ENCODE measurements at regions of chr18 and their contacts with region 1.

Region 1: GRCh38 chr18:45820106-45820745 is 5.2 kb upstream of the SIGLEC15 start:
- DNase-seq: no peak
- H3K4me3 ChIP-seq: no peak overlapping the region
- H3K4me3 Mint-ChIP-seq: no peak overlapping the region
- H3K27ac ChIP-seq: no peak overlapping the region
- H3K27ac Mint-ChIP-seq: no peak overlapping the region
- H3K4me1 ChIP-seq: peaks cover 2% of the 10 kb centered on the region
- H3K4me1 Mint-ChIP-seq: peaks cover 7 to 10% (median 9%) of the 10 kb centered on the region in 3 donors
- H3K27me3 ChIP-seq: no peaks in the 10 kb centered on the region
- H3K27me3 Mint-ChIP-seq: peaks cover 10 to 30% of the 10 kb centered on the region in 2 donors

Region 2: DNA sequence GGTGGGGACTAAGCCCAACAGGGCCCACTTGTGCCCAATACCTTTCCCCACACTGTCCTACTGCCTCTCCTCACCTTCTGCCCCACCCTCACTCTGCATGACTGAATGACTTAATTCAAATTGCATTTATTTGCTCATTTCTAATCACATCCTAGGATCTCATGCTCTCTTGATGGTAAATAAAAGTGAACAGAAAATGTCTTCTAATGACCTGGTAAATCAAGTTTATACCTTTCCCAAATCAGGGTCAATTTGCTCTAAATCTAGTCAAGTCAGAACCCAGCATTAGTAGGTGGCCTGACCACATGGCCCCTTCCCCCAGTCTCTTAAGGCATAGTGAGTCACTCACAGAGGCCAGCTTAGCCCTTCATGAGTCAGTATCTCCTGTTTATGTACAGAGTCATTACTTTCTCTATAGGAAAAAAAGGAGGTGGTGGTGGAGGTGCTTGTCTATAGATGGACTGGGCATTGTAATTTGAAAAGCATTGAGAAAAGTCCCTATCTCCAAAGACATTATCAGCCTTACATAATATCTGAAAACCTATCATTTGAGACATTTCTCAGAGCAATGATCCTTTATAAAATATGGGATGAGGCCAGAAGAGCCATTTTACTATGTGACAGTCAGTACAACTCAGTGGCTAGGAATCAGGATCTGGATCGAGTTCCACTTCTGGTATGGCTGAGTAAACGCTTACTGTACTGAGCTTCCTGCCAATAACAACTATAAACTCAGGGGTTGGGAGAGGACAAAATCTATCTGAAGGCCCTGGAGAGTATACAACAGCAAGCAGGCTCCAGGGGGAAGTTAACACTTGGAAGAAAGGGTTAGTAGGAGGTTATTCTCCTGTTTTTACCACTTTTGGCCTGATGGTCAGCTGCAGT is 17.4 kb before region 1 on chr18:
- CTCF ChIA-PET with region 1: no interaction called
- POLR2A ChIA-PET with region 1: interaction called, 14 read pairs
- DNase-seq: no peak
- H3K4me3 ChIP-seq: no peak overlapping the region
- H3K4me3 Mint-ChIP-seq: no peak overlapping the region
- H3K27ac ChIP-seq: no peak overlapping the region
- H3K27ac Mint-ChIP-seq: no peak overlapping the region
- H3K4me1 ChIP-seq: no peaks in the 10 kb centered on the region
- H3K4me1 Mint-ChIP-seq: no peaks in the 10 kb centered on the region
- H3K27me3 ChIP-seq: peaks cover 3% of the 10 kb centered on the region
- H3K27me3 Mint-ChIP-seq: peaks cover 9 to 31% of the 10 kb centered on the region in 2 donors

Measured in CD8-positive, alpha-beta memory T cell (primary cell).